ENCODE measurements at regions of chr16 and their contacts with region 1.

Region 1: GRCh38 chr16:7074742-7075141 is 257.9 kb upstream of the RBFOX1 start:
- DNase-seq: no peak
- ATAC-seq: no peak
- H3K4me3 ChIP-seq: no peak overlapping the region
- H3K27ac ChIP-seq: no peak overlapping the region
- H3K4me1 ChIP-seq: no peaks in the 10 kb centered on the region
- H3K27me3 ChIP-seq: no peaks in the 10 kb centered on the region
- CTCF ChIP-seq: no peak
- EP300 ChIP-seq: no peak
- POLR2A ChIP-seq: no peak
- RAD21 ChIP-seq: no peak

Region 2: GRCh38 chr16:7037495-7037894 is 37.2 kb before region 1 on chr16:
- CTCF ChIA-PET with region 1: no interaction called
- POLR2A ChIA-PET with region 1: no interaction called
- in situ Hi-C with region 1: no loop called
- intact Hi-C with region 1: loop called (anchors 1 kb)
- DNase-seq: peak; percentile 37
- ATAC-seq: peak; percentile 69
- H3K4me3 ChIP-seq: no peak overlapping the region
- H3K27ac ChIP-seq: no peak overlapping the region
- H3K4me1 ChIP-seq: peaks cover 6% of the 10 kb centered on the region
- H3K27me3 ChIP-seq: no peaks in the 10 kb centered on the region
- CTCF ChIP-seq: no peak
- EP300 ChIP-seq: no peak
- POLR2A ChIP-seq: no peak
- RAD21 ChIP-seq: no peak

Region 3: DNA sequence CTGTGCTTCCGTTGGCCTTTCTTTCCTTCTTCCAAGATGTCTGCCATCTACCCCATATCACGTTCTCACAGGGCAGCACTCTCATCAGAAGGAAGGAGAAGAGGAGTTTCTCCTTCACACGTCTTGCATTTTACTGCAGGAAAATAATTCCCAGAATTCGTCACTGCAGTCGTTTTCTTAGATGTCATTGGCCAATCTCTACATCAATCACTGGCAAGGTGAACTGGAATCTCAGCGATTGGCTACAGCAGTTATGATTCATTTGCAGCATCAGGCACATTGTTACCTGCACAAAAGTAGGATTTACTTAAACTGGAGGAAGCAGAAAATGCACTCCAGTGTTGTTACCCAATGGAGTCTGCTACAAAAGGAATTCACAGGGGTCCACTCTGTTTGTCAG is 19.3 kb before region 1 on chr16:
- CTCF ChIA-PET with region 1: no interaction called
- POLR2A ChIA-PET with region 1: no interaction called
- in situ Hi-C with region 1: no loop called
- intact Hi-C with region 1: no loop called
- DNase-seq: no peak
- ATAC-seq: no peak
- H3K4me3 ChIP-seq: no peak overlapping the region
- H3K27ac ChIP-seq: no peak overlapping the region
- H3K4me1 ChIP-seq: no peaks in the 10 kb centered on the region
- H3K27me3 ChIP-seq: no peaks in the 10 kb centered on the region
- CTCF ChIP-seq: no peak
- EP300 ChIP-seq: no peak
- POLR2A ChIP-seq: no peak
- RAD21 ChIP-seq: no peak

Region 4: GRCh38 chr16:7482032-7482431 is 407.3 kb after region 1 on chr16:
- CTCF ChIA-PET with region 1: no interaction called
- POLR2A ChIA-PET with region 1: no interaction called
- in situ Hi-C with region 1: no loop called
- intact Hi-C with region 1: no loop called
- DNase-seq: no peak
- ATAC-seq: no peak
- H3K4me3 ChIP-seq: no peak overlapping the region
- H3K27ac ChIP-seq: no peak overlapping the region
- H3K4me1 ChIP-seq: no peaks in the 10 kb centered on the region
- H3K27me3 ChIP-seq: no peaks in the 10 kb centered on the region; a peak in 1 of 5 replicates
- CTCF ChIP-seq: no peak
- EP300 ChIP-seq: no peak
- POLR2A ChIP-seq: no peak
- RAD21 ChIP-seq: no peak